ENCODE measurements at regions of chr16 and their contacts with region 1.

Region 1: GRCh38 chr16:21184834-21185233 is 26.4 kb downstream of the LDAF1 start:
- DNase-seq: no peak
- ATAC-seq: peak; percentile 18
- H3K4me3 ChIP-seq: no peak overlapping the region
- H3K4me3 Mint-ChIP-seq: no peak overlapping the region
- H3K27ac ChIP-seq: no peak overlapping the region
- H3K27ac Mint-ChIP-seq: no peak overlapping the region
- H3K4me1 ChIP-seq: no peaks in the 10 kb centered on the region
- H3K4me1 Mint-ChIP-seq: peaks cover 0 to 5% (median 4%) of the 10 kb centered on the region in 7 donors
- H3K27me3 ChIP-seq: no peaks in the 10 kb centered on the region
- H3K27me3 Mint-ChIP-seq: peaks cover 0 to 3% (median 0%) of the 10 kb centered on the region in 5 donors

Region 2: DNA sequence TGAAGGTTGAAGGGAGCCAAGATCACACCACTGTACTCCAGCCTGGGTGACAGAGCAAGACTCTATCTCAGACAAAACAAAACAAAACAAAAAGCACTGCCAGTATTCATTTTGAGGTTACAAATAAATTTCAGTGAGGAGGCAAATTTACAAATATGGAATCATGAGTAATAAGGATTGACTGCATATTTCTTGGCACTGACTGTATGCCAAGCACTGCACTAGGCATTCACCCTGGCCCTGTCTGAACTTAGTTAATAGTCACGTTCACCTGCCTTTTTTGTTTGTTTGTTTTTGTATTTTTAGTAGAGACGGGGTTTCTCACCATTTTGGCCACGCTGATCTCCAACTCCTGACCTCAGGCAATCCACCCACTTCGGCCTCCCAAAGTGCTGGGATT is 21.3 kb before region 1 on chr16:
- CTCF ChIA-PET with region 1: no interaction called
- POLR2A ChIA-PET with region 1: no interaction called
- intact Hi-C with region 1: no loop called
- DNase-seq: no peak
- ATAC-seq: no peak
- H3K4me3 ChIP-seq: no peak overlapping the region
- H3K4me3 Mint-ChIP-seq: no peak overlapping the region
- H3K27ac ChIP-seq: no peak overlapping the region
- H3K27ac Mint-ChIP-seq: no peak overlapping the region
- H3K4me1 ChIP-seq: peaks cover 3 to 6% of the 10 kb centered on the region in 2 donors
- H3K4me1 Mint-ChIP-seq: peaks cover 10 to 30% (median 20%) of the 10 kb centered on the region in 7 donors
- H3K27me3 ChIP-seq: no peaks in the 10 kb centered on the region
- H3K27me3 Mint-ChIP-seq: no peaks in the 10 kb centered on the region

Region 3: GRCh38 chr16:21277927-21278706 is 93.3 kb after region 1 on chr16 and contains the start of gene CRYM:
- CTCF ChIA-PET with region 1: no interaction called
- POLR2A ChIA-PET with region 1: no interaction called
- intact Hi-C with region 1: loop called in 1 of 2 experiments (anchors 2 kb)
- DNase-seq: peak in 7 of 9 donors; percentile 10 to 56 (median 17)
- ATAC-seq: peak; percentile 83
- H3K4me3 ChIP-seq: no peak within 1 kb of the TSS
- H3K4me3 Mint-ChIP-seq: peak within 1 kb of the TSS in 8 of 10 donors; percentile 24 to 69 (median 50)
- H3K27ac ChIP-seq: no peak within 1 kb of the TSS
- H3K27ac Mint-ChIP-seq: no peak within 1 kb of the TSS
- H3K4me1 ChIP-seq: no peaks in the 10 kb centered on the region
- H3K4me1 Mint-ChIP-seq: peaks cover 0 to 7% (median 5%) of the 10 kb centered on the region in 7 donors
- H3K27me3 ChIP-seq: peaks cover 0 to 10% of the 10 kb centered on the region in 2 donors
- H3K27me3 Mint-ChIP-seq: peaks cover 60 to 78% (median 66%) of the 10 kb centered on the region in 5 donors
- total RNA-seq, gene CRYM: 0.44 TPM in 1 of 5 experiments, not detected in the others

Region 4: DNA sequence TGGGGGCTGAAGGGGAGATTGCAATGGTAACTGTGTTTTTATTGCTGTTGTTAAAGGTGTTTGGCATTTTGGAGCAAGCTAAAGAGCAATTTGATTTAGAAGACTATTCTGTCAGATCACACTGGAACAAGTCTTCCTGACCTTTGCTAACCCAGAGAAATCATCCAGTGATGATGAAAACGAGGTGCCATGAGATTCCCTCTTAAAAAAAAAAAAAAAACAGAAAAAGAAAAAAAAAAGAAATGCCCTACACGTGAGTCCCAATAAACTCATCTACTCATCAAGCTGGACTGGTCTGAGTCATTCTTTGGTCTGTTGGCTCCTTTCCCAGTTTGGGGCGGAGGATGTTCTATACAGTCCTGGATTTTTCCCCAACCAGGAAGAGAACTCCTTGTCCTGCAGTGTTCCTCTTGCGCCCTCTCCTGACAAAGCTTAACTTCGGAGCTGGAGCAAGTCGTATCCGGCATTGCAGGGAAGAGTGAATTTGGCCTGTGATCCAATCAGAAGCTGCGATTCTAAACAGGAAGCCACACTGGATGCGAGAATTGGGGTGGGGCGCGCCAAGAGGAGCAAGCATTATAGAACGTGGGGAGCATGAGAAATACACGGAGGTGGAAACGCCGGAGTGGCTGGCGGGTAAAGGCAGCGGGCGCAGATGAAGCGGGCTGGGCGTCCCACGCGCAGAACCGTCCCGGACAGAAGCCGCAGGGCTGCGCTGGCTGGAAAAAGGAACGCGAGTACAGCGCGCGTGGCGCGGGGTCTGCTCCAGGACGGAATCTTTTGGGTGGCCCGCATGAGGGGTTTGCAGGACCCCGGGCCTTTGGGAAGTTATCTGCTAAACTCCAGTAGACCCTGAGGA is 115.7 kb after region 1 on chr16:
- CTCF ChIA-PET with region 1: no interaction called
- POLR2A ChIA-PET with region 1: no interaction called
- intact Hi-C with region 1: loop called (anchors 1 kb)
- DNase-seq: peak in 6 of 9 donors; percentile 4 to 59 (median 8)
- ATAC-seq: peak; percentile 77
- H3K4me3 ChIP-seq: peak overlapping the region; percentile 69
- H3K4me3 Mint-ChIP-seq: peak overlapping the region; percentile 88 to 99 (median 94)
- H3K27ac ChIP-seq: no peak overlapping the region
- H3K27ac Mint-ChIP-seq: peak overlapping the region in 3 of 9 donors; percentile 19 to 72 (median 69)
- H3K4me1 ChIP-seq: peaks cover 0 to 10% of the 10 kb centered on the region in 2 donors
- H3K4me1 Mint-ChIP-seq: peaks cover 22 to 29% (median 27%) of the 10 kb centered on the region in 7 donors
- H3K27me3 ChIP-seq: no peaks in the 10 kb centered on the region
- H3K27me3 Mint-ChIP-seq: peaks cover 8 to 57% (median 24%) of the 10 kb centered on the region in 5 donors

Region 5: GRCh38 chr16:22321339-22322001 is 1136.6 kb after region 1 on chr16:
- CTCF ChIA-PET with region 1: interaction called, 3 read pairs
- POLR2A ChIA-PET with region 1: no interaction called
- intact Hi-C with region 1: loop called in 1 of 2 experiments (anchors 1 kb)
- DNase-seq: peak; percentile 53 to 82 (median 73)
- ATAC-seq: peak; percentile 83
- H3K4me3 ChIP-seq: no peak overlapping the region
- H3K4me3 Mint-ChIP-seq: no peak overlapping the region
- H3K27ac ChIP-seq: no peak overlapping the region
- H3K27ac Mint-ChIP-seq: peak overlapping the region in 8 of 9 donors; percentile 67 to 85 (median 81)
- H3K4me1 ChIP-seq: no peaks in the 10 kb centered on the region
- H3K4me1 Mint-ChIP-seq: peaks cover 0 to 15% (median 6%) of the 10 kb centered on the region in 7 donors
- H3K27me3 ChIP-seq: no peaks in the 10 kb centered on the region
- H3K27me3 Mint-ChIP-seq: no peaks in the 10 kb centered on the region

Measured in naive thymus-derived CD4-positive, alpha-beta T cell (primary cell).